GM12878 (cell line): ENCODE measurements at regions of chr15 and their contacts with region 1.

Region 1: DNA sequence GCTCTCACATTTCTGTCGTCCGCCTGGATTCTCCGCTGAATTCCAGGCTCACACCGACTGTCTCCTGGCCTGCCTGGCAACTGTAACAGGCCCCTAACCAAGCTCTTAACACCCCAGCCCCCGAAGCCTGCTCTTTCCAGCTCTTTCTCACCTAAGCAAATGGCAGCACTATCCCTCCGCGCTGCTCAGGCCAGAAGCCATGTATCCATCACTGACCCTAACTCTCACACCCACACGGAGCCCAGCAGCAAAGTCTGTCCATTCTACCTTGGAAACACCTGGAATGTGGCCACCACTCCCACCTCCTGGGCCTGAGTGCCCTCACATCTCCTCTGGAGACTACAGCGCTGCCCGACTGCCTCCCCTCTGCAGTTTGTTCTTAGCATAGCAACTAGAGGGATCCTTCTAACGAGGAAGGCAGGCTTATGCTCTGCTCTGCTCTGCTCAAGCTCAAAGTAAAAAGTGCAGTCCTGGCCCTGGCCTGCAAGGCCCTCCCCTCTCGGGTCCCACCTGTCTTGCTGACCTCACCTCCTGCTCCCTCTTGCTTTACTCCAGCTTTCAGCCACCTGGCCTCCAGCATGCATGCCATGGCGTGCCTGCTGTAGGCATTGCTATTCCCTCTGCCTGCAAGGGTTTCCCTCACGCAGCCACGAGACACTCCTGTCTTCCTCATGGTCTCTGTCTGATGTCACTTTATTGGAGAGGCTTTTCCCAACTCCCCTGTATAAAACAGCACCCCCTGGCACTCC is 27.2 kb downstream of the FEM1B start:
- DNase-seq: no peak
- ATAC-seq: no peak
- H3K4me3 ChIP-seq: no peak overlapping the region
- H3K27ac ChIP-seq: no peak overlapping the region
- H3K4me1 ChIP-seq: peaks cover 11% of the 10 kb centered on the region
- H3K27me3 ChIP-seq: no peaks in the 10 kb centered on the region
- CTCF ChIP-seq: no peak
- EP300 ChIP-seq: no peak
- POLR2A ChIP-seq: no peak
- RAD21 ChIP-seq: no peak

Region 2: DNA sequence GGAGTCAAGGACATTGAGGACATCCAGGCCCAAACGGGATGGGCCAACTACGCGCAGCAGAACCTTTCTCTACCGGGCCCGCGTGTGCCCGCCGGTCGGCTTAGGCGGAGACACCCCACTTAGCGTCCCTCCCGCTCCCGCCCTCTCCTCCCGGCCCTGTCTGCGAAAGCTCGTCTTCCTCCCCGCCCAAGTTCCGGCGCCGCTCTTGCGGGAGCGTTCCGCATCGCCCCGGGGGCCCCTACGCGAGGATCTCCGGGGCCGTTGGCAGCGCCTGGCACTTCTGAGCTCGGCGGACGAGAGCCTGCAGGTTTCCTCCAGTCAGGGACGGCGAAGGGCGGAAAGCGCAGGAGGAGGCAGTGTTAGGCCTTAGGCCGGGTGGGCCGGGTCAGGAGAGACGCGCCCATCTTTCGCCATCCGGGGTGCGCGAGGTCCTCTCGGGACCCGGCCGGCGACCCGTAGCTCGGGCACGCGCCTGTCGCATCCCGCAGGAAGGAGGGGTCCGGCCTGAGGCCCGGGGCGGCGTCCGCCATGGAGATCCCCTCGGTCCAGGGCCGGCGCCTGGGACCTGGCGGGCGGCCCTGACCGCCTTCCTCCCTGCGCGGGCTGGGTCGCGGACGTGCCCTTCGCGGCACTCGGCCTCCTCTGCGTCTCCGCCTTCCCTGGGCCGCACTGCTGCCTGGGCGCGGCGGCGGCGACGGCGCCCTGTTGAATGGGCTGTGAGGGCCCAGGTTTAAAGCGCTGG is 27.0 kb before region 1 on chr15 and contains the start of gene FEM1B:
- CTCF ChIA-PET with region 1: interaction called, 30 read pairs
- POLR2A ChIA-PET with region 1: interaction called, 4 read pairs
- RAD21 ChIA-PET with region 1: interaction called, 11 read pairs
- SMC1A ChIA-PET with region 1: interaction called, 16 read pairs
- in situ Hi-C with region 1: no loop called
- intact Hi-C with region 1: loop called (anchors 1 kb)
- DNase-seq: peak; percentile 68
- ATAC-seq: peak; percentile 88
- H3K4me3 ChIP-seq: peak within 1 kb of the TSS; percentile 98
- H3K27ac ChIP-seq: peak within 1 kb of the TSS; percentile 91
- H3K4me1 ChIP-seq: peaks cover 5% of the 10 kb centered on the region
- H3K27me3 ChIP-seq: no peaks in the 10 kb centered on the region
- CTCF ChIP-seq: peak in 1 of 3 experiments; percentile 50; a peak in 2 of 6 replicates
- EP300 ChIP-seq: 0 out of 4 replicates have a peak, but pooled peaks of 1 of the 2 experiments have one; percentile 31
- POLR2A ChIP-seq: peak; percentile 90
- RAD21 ChIP-seq: no peak; the same call in 1 of the 2 replicates
- polyA plus RNA-seq, gene FEM1B: 5.5 to 5.7 TPM

Region 3: DNA sequence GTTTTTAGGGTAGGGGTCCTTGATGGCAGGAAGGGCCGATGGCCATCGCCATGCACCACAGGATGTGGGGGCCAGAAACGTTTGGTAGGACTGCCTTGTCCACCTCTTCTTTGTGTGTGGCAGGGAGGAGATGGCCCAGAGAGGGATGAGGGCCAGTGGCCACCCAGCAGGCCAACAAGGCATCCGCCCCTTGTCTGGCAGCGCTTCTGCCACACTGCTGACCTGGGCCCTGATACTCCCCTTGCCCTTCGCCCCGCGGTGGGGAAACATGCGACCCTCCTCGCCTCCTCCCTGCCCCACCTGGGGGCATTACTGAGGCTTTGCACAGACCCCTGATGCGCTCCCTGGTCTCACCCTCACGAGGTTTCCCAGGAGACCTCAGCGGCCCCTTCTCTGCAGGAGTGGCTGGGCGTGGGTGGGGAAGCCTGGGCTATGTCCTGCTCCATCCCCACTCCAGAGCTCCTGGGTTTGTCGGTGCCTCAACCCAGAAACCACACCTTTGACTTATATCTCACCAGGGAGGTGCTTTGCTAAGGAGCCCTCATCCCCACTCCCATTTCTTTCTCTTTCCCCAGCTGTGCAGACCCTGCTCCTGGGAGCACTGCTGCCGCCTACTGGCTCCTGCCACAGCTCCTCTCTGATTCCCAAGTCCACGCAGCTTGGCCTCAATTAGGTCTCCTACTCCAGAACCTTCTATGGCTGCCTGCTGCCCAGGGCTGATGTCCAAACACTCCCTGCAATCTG is 11.5 kb after region 1 on chr15:
- CTCF ChIA-PET with region 1: interaction called, 22 read pairs
- POLR2A ChIA-PET with region 1: no interaction called
- RAD21 ChIA-PET with region 1: interaction called, 3 read pairs
- SMC1A ChIA-PET with region 1: interaction called, 3 read pairs
- in situ Hi-C with region 1: no loop called
- intact Hi-C with region 1: no loop called
- DNase-seq: no peak
- ATAC-seq: peak; percentile 35; the same call in 2 of the 3 replicates
- H3K4me3 ChIP-seq: no peak overlapping the region
- H3K27ac ChIP-seq: no peak overlapping the region
- H3K4me1 ChIP-seq: no peaks in the 10 kb centered on the region
- H3K27me3 ChIP-seq: no peaks in the 10 kb centered on the region; a peak in 2 of 4 replicates
- CTCF ChIP-seq: peak; percentile 36 to 52 (median 40); a peak in 5 of 6 replicates
- EP300 ChIP-seq: no peak
- POLR2A ChIP-seq: no peak
- RAD21 ChIP-seq: peak; percentile 23; the same call in 1 of the 2 replicates

Region 4: DNA sequence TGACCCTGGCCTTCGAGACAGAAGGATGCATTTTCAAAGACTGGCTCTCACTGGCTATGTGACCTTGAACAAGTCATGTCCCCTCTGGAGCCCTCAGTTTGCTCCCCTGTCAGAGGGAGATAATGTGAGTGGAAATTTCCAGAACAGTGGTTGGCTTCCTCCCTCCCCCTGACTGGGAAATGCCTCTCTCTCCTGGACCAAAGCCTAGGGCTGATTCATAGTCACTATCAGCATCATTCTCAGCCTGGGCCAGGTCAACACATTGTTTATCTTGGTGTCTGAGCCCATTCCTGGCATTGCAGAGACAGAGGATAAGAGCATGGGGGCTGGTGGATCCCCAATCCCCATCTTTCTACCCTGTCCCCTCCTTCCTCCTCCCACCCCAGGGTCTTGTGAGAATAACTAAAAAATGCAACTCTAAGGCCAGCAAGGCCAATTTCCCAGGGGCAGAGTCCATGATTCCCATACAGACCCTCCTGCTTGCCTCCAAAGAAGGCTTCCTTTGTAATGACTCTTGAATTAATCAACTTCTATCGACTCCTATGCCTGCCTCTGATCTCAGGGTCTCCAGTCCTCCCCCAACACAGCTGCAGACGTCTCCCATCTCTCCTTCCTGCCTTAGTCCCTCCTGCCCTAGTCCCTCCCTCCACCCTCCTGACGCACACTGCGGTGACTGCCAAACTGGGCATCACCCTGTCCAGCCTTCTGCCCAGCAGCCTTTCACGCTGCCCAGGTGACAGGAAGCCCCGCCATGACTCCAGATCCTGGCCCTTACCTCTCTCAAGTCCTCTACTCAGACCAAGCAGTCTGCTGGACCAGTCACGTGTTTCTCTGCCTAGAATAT is 238.6 kb after region 1 on chr15:
- CTCF ChIA-PET with region 1: interaction called, 10 read pairs
- POLR2A ChIA-PET with region 1: no interaction called
- RAD21 ChIA-PET with region 1: interaction called, 8 read pairs
- SMC1A ChIA-PET with region 1: interaction called, 5 read pairs
- in situ Hi-C with region 1: loop called (anchors 5 kb)
- intact Hi-C with region 1: loop called (anchors 1 kb)
- DNase-seq: no peak
- ATAC-seq: no peak
- H3K4me3 ChIP-seq: no peak overlapping the region
- H3K27ac ChIP-seq: no peak overlapping the region
- H3K4me1 ChIP-seq: no peaks in the 10 kb centered on the region
- H3K27me3 ChIP-seq: no peaks in the 10 kb centered on the region
- CTCF ChIP-seq: no peak
- EP300 ChIP-seq: no peak
- POLR2A ChIP-seq: no peak
- RAD21 ChIP-seq: no peak

Region 5: GRCh38 chr15:68672781-68673205 is 368.0 kb after region 1 on chr15:
- CTCF ChIA-PET with region 1: interaction called, 11 read pairs
- POLR2A ChIA-PET with region 1: no interaction called
- RAD21 ChIA-PET with region 1: interaction called, 7 read pairs
- SMC1A ChIA-PET with region 1: interaction called, 4 read pairs
- in situ Hi-C with region 1: no loop called
- intact Hi-C with region 1: loop called (anchors 2 kb)
- DNase-seq: no peak
- ATAC-seq: no peak
- H3K4me3 ChIP-seq: no peak overlapping the region
- H3K27ac ChIP-seq: no peak overlapping the region
- H3K4me1 ChIP-seq: peaks cover 6% of the 10 kb centered on the region
- H3K27me3 ChIP-seq: no peaks in the 10 kb centered on the region; a peak in 1 of 4 replicates
- CTCF ChIP-seq: no peak; a peak in 1 of 6 replicates
- EP300 ChIP-seq: no peak
- POLR2A ChIP-seq: no peak
- RAD21 ChIP-seq: no peak